Activated CD4-positive, alpha-beta memory T cell treated with anti-CD3 and anti-CD28 coated beads for 36 hours (primary cell): ENCODE measurements at regions of chr13 and their contacts with region 1.

Region 1: GRCh38 chr13:74336546-74336945 is 202.3 kb upstream of the KLF12 start:
- DNase-seq: no peak
- H3K4me3 Mint-ChIP-seq: no peak overlapping the region
- H3K27ac Mint-ChIP-seq: no peak overlapping the region
- H3K4me1 Mint-ChIP-seq: no peaks in the 10 kb centered on the region
- H3K27me3 Mint-ChIP-seq: no peaks in the 10 kb centered on the region

Region 2: DNA sequence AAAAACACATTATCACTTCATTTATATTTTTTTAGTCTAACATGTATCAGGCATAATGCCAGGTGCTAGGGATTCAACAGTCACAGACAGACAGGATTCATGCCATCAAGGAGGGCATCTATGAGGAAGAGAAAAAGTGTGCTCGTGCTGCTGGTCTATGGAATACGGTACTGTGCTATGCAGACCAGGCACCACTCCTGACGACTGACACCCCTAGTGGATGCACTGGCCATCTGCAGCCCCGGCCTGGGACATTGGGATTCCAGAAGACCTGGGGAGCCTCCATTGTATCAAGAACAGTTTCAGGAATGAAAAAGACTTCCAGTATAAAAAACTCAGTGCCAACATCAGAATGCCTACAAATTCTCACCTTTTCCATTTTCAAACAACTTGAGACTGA is 296.3 kb before region 1 on chr13:
- CTCF ChIA-PET with region 1: no interaction called
- POLR2A ChIA-PET with region 1: no interaction called
- intact Hi-C with region 1: no loop called
- DNase-seq: peak; percentile 32
- H3K4me3 Mint-ChIP-seq: no peak overlapping the region
- H3K27ac Mint-ChIP-seq: no peak overlapping the region
- H3K4me1 Mint-ChIP-seq: peaks cover 65% of the 10 kb centered on the region
- H3K27me3 Mint-ChIP-seq: no peaks in the 10 kb centered on the region

Region 3: GRCh38 chr13:74306496-74306895 is 30.1 kb before region 1 on chr13:
- CTCF ChIA-PET with region 1: no interaction called
- POLR2A ChIA-PET with region 1: no interaction called
- intact Hi-C with region 1: loop called (anchors 5 kb)
- DNase-seq: no peak
- H3K4me3 Mint-ChIP-seq: no peak overlapping the region
- H3K27ac Mint-ChIP-seq: no peak overlapping the region
- H3K4me1 Mint-ChIP-seq: peaks cover 17% of the 10 kb centered on the region
- H3K27me3 Mint-ChIP-seq: no peaks in the 10 kb centered on the region